ENCODE measurements at regions of chr20 and their contacts with region 1.

Region 1: DNA sequence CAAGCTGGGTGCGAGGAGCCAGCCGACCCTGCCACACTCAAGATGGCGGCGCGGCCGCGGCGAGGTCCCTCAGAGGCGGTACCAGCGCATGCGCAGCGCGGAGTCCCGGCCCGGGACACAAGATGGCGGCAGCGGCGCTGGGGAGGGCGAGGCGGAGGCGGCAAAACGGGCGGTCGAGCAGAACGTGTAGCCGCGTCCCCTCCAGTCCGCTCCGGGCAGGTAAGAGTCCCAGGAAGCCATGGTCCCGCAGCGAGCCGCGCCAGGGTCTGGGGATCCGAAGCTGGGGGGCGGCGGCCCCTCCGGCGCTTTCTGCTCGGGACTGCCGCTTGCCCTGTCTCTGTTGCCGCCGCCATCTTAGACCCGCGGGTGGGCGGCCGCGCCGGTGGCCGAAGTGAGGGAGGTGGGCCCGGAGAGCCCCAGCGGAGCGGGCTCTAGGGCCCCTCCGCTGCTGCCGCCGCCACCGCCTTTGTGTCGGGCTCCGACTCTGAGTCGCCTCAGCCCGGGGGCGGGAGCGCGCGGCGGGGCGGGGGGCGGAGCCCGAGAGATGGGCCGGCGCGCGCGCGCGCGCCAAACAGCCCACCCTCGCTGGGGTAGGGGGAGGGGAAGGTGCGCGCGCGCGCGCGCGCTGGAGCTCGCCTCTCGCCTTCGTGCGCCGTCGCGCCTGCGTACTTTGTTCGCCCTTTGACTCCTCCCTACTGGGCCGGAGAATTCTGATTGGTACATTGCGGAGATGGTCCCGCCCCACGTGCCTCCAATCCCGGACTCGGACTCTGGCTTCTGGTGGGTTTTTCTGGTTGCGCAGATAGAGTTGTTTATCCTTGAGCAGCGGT is at the start of gene PCIF1:
- DNase-seq: peak; percentile 99
- ATAC-seq: peak; percentile 93
- total RNA-seq, gene PCIF1: 22.5 TPM

Region 2: DNA sequence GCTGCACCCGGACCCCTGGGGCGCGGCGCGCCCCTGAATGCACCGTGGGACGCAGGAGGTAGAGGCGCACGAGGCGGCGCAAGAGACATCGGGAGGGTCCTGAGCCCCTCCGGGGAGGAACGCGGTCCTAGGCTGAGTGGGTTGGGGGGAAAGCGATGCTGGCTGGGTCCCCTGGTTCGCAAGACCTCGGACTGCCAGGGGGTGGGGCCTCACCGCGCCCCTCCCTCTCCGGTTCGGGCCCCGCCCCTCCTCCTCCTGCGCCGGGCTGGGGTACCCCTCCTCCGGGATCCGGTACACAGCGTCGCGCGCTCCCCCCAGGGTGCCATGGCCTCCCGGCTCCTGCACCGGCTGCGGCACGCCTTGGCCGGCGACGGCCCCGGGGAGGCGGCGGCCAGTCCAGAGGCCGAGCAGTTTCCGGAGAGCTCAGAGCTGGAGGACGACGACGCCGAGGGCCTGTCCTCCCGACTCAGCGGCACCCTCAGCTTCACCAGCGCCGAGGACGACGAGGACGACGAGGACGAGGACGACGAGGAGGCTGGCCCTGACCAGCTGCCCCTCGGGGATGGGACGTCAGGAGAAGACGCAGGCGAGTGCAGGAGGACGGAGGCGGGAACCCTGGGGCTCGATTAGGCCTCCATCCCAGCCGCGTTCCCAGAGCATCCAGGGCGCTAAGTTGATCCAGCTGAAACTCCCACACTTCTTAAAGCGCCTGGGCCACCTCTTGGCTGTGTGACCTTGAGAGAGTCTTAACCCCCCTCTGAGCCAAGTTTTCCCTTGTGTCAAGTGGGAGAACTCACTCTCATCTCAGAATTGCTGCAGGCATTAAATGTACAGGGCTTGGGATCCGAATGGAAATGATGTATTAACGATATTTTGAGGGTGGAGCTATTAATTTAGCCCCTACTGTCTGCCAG is 100.7 kb before region 1 on chr20:
- intact Hi-C with region 1: loop called (anchors 2 kb)
- DNase-seq: peak; percentile 87
- ATAC-seq: peak; percentile 82

Region 3: GRCh38 chr20:45890985-45891983 is 43.5 kb before region 1 on chr20 and contains the starts of genes CTSA and NEURL2:
- intact Hi-C with region 1: loop called (anchors 1 kb)
- DNase-seq: peak; percentile 98
- ATAC-seq: peak; percentile 84
- total RNA-seq, gene CTSA: 113 TPM
- total RNA-seq, gene NEURL2: 5.0 TPM

Region 4: GRCh38 chr20:45910670-45911485 is 23.9 kb before region 1 on chr20:
- intact Hi-C with region 1: loop called (anchors 2 kb)
- DNase-seq: peak; percentile 96
- ATAC-seq: peak; percentile 84

Region 5: DNA sequence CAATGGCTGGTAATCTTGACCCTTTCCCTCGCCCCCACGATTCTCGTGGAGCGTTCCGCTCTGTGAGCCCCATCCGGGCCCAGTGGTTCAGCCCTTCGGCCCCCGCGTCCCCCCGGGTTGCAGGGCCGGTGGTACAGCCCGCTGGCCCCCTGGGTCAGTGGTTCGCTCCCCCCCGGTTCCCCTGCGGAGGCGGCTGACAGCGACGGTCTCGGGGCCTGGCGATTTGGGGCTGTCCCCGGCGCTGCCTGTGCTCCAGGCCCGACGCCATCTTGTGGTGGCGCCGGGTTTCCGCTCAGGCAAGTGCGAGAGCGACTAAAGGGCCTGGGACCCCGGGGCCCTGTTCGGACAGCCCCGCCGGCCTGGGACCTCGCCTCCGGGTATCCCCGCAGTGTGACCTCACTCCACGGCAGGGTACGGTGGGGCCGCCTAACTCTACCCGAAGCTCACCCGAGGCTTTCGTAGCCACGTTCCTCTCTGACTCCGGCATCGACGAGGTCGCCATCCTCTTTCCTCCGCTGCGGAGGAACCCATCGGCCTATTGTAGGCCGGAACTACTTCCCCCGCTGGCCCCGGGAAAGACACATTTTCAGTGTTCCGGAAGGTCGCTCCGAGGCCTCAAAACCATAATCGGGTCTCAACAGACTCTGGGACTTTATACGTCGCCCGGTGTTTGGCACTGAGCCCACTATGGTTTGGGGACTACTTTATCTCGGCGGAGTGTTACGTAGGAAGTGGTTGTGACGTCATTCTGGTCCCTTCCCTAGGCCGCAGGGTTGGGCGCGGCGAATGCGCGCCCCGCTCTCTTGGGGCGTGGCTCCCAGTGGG is 37.1 kb after region 1 on chr20 and contains the start of gene ZNF335:
- intact Hi-C with region 1: loop called (anchors 2 kb)
- DNase-seq: peak; percentile 98
- ATAC-seq: peak; percentile 96
- total RNA-seq, gene ZNF335: 9.7 TPM